Thyroid gland (tissue), 4 donors: ENCODE measurements at regions of chr1 and their contacts with region 1.

Region 1: GRCh38 chr1:176897350-176898236 is 266.9 kb downstream of the ASTN1 start:
- DNase-seq: peak; percentile 48 to 54
- H3K4me3 ChIP-seq: no peak overlapping the region
- H3K27ac ChIP-seq: no peak overlapping the region
- H3K4me1 ChIP-seq: peaks cover 0 to 4% of the 10 kb centered on the region in 2 donors
- H3K27me3 ChIP-seq: no peaks in the 10 kb centered on the region
- CTCF ChIP-seq: peak; percentile 9 to 75 (median 54)
- POLR2A ChIP-seq: no peak

Region 2: DNA sequence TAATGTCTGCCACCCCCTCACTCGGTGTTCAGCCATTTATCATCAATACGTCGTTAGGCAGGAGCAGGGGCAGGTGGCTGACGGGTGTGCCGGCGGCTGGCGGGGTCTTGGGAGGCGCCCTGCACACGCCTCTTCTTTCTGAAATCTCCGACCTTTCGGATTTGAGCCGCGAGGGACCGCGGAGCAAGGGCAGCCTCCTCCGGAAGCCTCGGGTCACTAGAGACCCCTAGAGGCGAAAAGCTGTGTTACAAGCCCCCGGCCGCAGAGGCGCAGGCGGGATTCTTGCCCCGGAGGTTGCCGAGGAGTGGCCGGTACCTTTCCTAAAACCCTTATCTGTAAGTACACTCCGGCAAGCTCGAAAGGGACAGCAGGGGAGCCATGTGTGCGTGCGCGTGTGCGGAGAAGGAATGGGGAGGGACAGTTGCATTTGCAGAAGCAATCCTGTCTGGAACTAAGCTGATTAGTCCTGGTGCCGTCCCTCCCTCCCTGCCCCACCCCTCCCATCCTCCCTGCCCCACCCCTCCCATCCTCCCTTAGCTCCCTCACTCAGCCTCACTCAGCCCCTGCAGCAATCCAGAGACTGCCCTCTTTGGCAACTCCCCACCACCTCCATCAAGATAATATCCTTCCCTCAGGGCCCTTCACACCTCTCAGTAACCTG is 284.2 kb after region 1 on chr1:
- intact Hi-C with region 1: loop called (anchors 5 kb)
- DNase-seq: peak; percentile 55 to 56
- H3K4me3 ChIP-seq: no peak overlapping the region
- H3K27ac ChIP-seq: no peak overlapping the region
- H3K4me1 ChIP-seq: no peaks in the 10 kb centered on the region
- H3K27me3 ChIP-seq: no peaks in the 10 kb centered on the region
- CTCF ChIP-seq: peak; percentile 63 to 80 (median 72)
- POLR2A ChIP-seq: no peak